AG04449 (cell line): ENCODE measurements at regions of chr17 and their contacts with region 1.

Region 1: GRCh38 chr17:35540589-35541404 is 3.3 kb upstream of the SLFN12L start:
- DNase-seq: no peak
- H3K4me3 ChIP-seq: no peak overlapping the region; the same call in 1 of the 2 replicates
- CTCF ChIP-seq: no peak

Region 2: GRCh38 chr17:35170968-35171771 is 369.6 kb before region 1 on chr17:
- CTCF ChIA-PET with region 1: interaction called, 72 read pairs
- POLR2A ChIA-PET with region 1: no interaction called
- DNase-seq: no peak
- H3K4me3 ChIP-seq: no peak overlapping the region
- CTCF ChIP-seq: no peak

Region 3: GRCh38 chr17:35312790-35313711 is 227.7 kb before region 1 on chr17:
- CTCF ChIA-PET with region 1: interaction called, 455 read pairs
- POLR2A ChIA-PET with region 1: no interaction called
- DNase-seq: peak; percentile 16
- H3K4me3 ChIP-seq: peak overlapping the region; percentile 12; the same call in 1 of the 2 replicates
- CTCF ChIP-seq: peak; percentile 69

Region 4: DNA sequence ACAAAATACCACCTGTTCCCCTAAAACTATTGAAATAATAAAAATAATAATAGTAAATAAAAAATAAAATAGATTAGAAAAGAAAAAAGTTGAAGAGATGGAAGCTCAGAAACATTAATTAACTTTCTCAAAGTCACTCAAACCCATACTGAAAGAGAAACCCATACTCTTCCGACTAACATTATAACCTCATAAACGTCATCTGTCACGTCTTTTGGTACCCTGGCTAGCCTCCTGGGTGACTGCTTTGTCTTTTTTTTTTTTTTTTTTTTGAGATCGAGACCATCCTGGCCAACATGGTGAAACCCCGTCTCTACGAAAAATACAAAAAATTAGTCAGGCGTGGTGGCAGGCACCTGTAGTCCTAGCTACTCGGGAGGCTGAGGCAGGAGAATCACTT is 10.9 kb before region 1 on chr17:
- CTCF ChIA-PET with region 1: interaction called, 12 read pairs
- POLR2A ChIA-PET with region 1: no interaction called
- DNase-seq: no peak
- H3K4me3 ChIP-seq: no peak overlapping the region
- CTCF ChIP-seq: no peak